CD4-positive, alpha-beta T cell (primary cell): ENCODE measurements at regions of chr7 and their contacts with region 1.

Region 1: DNA sequence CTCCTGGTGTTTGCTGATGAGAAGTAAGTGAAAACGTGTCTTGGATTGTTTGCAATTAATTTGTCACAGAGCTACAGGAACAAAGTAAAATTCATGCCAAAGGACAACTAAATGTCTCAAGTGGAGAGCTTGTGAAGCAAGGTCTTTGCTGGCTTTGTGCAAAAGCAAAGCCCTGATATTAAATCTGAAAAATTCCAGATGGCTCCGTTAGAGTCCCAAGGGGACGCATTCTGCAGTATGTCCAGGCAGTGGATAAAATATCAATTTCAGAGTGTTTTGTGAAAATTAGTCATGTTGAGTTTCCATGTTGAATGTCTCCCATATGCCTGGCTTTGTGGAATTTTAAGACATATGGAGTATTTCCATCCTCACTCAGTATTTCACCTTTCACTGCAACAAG is 102.5 kb upstream of the PTN start:
- DNase-seq: no peak
- ATAC-seq: no peak
- H3K4me3 ChIP-seq: no peak overlapping the region
- H3K4me3 Mint-ChIP-seq: no peak overlapping the region
- H3K27ac ChIP-seq: no peak overlapping the region
- H3K27ac Mint-ChIP-seq: no peak overlapping the region
- H3K4me1 ChIP-seq: no peaks in the 10 kb centered on the region
- H3K4me1 Mint-ChIP-seq: no peaks in the 10 kb centered on the region
- H3K27me3 ChIP-seq: no peaks in the 10 kb centered on the region
- H3K27me3 Mint-ChIP-seq: peaks cover 6% of the 10 kb centered on the region
- CTCF ChIP-seq: no peak

Region 2: DNA sequence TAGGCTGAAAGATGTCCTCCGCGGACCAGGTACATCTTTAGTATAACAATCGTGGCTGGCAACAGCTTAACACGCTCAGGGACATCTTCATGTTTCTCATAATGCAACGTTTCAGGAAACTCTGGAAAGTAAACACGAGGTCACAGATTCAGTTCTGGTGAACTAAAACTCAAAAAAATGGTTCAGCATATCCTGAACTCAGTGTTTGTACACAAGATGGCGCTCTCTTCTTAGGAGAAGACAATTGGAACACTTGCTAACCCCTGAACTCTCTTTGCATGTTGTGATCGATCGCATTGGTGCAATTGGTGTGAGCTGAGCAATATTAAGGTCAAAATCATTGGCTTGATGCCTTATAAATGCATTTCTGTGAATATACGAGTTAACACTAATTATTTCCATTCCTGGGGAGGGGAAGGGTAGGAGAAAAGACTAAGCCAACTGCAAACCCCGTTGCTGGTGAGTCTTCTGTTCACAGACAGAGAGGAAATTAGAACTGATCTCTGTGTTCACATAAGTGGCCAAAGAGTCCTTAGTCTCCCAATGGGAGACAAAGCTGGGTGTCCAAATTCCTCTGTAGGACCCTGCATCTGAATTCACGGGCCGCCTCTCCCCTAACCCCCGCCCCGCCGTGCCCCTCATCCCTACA is 1644.9 kb before region 1 on chr7:
- CTCF ChIA-PET with region 1: no interaction called
- POLR2A ChIA-PET with region 1: no interaction called
- intact Hi-C with region 1: loop called in 1 of 2 experiments (anchors 5 kb)
- DNase-seq: peak in 6 of 14 experiments; percentile 9 to 77 (median 56)
- ATAC-seq: peak; percentile 54
- H3K4me3 ChIP-seq: no peak overlapping the region
- H3K4me3 Mint-ChIP-seq: no peak overlapping the region
- H3K27ac ChIP-seq: no peak overlapping the region
- H3K27ac Mint-ChIP-seq: no peak overlapping the region
- H3K4me1 ChIP-seq: peaks cover 8% of the 10 kb centered on the region
- H3K4me1 Mint-ChIP-seq: peaks cover 6% of the 10 kb centered on the region
- H3K27me3 ChIP-seq: peaks cover 0 to 3% of the 10 kb centered on the region in 2 experiments
- H3K27me3 Mint-ChIP-seq: peaks cover 13% of the 10 kb centered on the region
- CTCF ChIP-seq: peak; percentile 81

Region 3: DNA sequence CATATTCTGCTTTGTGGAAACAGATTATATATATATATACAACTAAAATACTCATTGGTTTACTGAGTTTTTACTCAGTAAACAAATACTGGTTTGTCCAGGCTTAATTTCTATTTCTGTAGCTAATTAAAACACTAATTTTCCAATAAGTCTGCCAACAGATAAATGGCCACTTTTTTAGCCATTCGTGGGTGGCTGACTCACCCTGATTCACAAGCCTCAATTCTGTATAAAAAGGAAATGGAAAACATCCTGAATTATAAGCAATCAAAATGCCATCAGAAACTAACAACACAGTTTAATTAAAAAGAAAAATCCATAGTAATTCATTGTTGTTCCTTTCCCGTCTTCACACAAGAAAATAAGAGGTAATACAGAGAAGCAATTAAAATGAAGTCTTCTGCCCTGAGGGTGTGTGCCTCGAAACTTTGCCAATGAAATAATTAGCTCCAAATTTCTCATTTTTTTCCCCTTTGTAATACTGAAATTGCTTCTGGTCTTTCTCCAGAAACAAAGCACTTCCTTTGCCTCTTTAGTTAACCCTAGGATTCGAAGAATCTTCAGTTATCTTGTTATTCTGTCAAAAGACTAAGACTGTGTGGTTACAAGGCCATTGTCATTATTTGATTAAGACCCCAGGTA is 16.2 kb after region 1 on chr7:
- CTCF ChIA-PET with region 1: no interaction called
- POLR2A ChIA-PET with region 1: no interaction called
- intact Hi-C with region 1: no loop called
- DNase-seq: no peak
- ATAC-seq: no peak
- H3K4me3 ChIP-seq: no peak overlapping the region
- H3K4me3 Mint-ChIP-seq: no peak overlapping the region
- H3K27ac ChIP-seq: no peak overlapping the region
- H3K27ac Mint-ChIP-seq: no peak overlapping the region
- H3K4me1 ChIP-seq: no peaks in the 10 kb centered on the region
- H3K4me1 Mint-ChIP-seq: no peaks in the 10 kb centered on the region
- H3K27me3 ChIP-seq: no peaks in the 10 kb centered on the region
- H3K27me3 Mint-ChIP-seq: peaks cover 8% of the 10 kb centered on the region
- CTCF ChIP-seq: no peak